ENCODE measurements at regions of chr10 and their contacts with region 1.

Region 1: DNA sequence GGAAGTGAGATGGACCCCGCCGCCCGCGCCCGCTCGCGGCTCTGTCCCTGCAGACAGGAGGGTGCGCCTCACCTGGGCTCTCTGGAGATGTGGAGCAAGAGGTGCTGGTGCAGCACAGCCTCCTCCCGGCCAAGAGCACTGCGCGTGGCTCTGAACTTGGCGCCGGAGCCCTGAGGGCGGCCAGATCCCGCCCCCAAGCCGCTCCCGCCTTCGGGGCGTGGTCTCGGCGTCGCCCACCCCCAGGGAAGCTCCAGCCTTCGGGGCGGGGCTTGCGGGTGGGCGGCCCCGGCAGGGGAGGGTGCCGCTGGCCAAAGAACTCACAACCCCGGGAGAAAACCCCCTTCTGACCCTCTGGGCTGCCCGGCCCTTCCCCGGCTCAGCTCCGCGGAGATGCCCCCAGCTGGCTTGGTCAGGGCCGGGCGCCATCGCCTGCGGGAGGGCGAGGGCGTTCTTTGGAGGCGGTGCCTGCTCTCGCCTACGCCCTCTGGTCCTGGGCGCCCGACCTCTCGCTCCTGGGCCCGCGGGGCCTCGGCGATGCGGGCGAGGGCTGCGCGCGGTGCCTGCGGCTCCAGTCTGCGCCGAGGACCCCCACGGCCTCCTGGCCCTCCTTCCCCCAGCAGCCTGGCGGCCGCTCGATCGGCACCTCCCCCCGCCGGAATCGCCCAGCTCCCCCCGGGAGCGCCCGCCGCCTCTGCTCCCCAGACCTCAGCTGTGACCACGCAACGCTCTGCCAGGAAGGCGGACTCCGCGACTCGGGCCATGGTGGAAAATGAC is at the start of gene ZNF488:
- DNase-seq: no peak
- H3K4me3 ChIP-seq: peak within 1 kb of the TSS; percentile 85
- H3K27me3 ChIP-seq: peaks cover 5% of the 10 kb centered on the region
- CTCF ChIP-seq: no peak
- polyA plus RNA-seq, gene ZNF488: 0.15 and 0.17 TPM in 2 replicates

Region 2: GRCh38 chr10:47214520-47214919 is 169.8 kb before region 1 on chr10:
- CTCF ChIA-PET with region 1: no interaction called
- POLR2A ChIA-PET with region 1: no interaction called
- DNase-seq: no peak
- H3K4me3 ChIP-seq: no peak overlapping the region
- H3K27me3 ChIP-seq: peaks cover 2% of the 10 kb centered on the region; the same call in 1 of the 2 replicates
- CTCF ChIP-seq: no peak

Region 3: GRCh38 chr10:47354162-47354561 is 30.2 kb before region 1 on chr10:
- CTCF ChIA-PET with region 1: no interaction called
- POLR2A ChIA-PET with region 1: no interaction called
- DNase-seq: no peak
- H3K4me3 ChIP-seq: no peak overlapping the region
- H3K27me3 ChIP-seq: peaks cover 3% of the 10 kb centered on the region; the same call in 1 of the 2 replicates
- CTCF ChIP-seq: peak; percentile 38

Region 4: GRCh38 chr10:47396311-47396729 is 12.0 kb after region 1 on chr10:
- CTCF ChIA-PET with region 1: interaction called, 10 read pairs
- POLR2A ChIA-PET with region 1: no interaction called
- DNase-seq: no peak
- H3K4me3 ChIP-seq: no peak overlapping the region
- H3K27me3 ChIP-seq: no peaks in the 10 kb centered on the region
- CTCF ChIP-seq: no peak